Adrenal gland (tissue), 19 donors: ENCODE measurements at regions of chr5 and their contacts with region 1.

Region 1: GRCh38 chr5:91383027-91383955 is at the start of gene ARRDC3:
- DNase-seq: peak; percentile 96 to 98 (median 97)
- H3K4me3 ChIP-seq: peak within 1 kb of the TSS; percentile 18 to 95 (median 70)
- H3K27ac ChIP-seq: peak within 1 kb of the TSS; percentile 92 to 98 (median 97)
- H3K4me1 ChIP-seq: peaks cover 7 to 18% of the 10 kb centered on the region in 2 donors
- H3K27me3 ChIP-seq: no peaks in the 10 kb centered on the region
- CTCF ChIP-seq: peak in 1 of 6 experiments; percentile 7
- POLR2A ChIP-seq: peak; percentile 99
- total RNA-seq, gene ARRDC3: 64.4 to 410 (median 174) TPM

Region 2: GRCh38 chr5:91101600-91102379 is 281.5 kb before region 1 on chr5:
- intact Hi-C with region 1: loop called in 1 of 2 experiments (anchors 5 kb)
- DNase-seq: peak; percentile 73 to 86 (median 79)
- H3K4me3 ChIP-seq: no peak overlapping the region
- H3K27ac ChIP-seq: peak overlapping the region in 2 of 5 donors; percentile 24 to 26
- H3K4me1 ChIP-seq: peaks cover under 1 to 43% of the 10 kb centered on the region in 2 donors
- H3K27me3 ChIP-seq: no peaks in the 10 kb centered on the region
- CTCF ChIP-seq: peak; percentile 43 to 93 (median 87)
- POLR2A ChIP-seq: no peak

Region 3: GRCh38 chr5:91110686-91111085 is 272.6 kb before region 1 on chr5:
- intact Hi-C with region 1: loop called in 1 of 2 experiments (anchors 10 kb)
- DNase-seq: no peak
- H3K4me3 ChIP-seq: no peak overlapping the region
- H3K27ac ChIP-seq: no peak overlapping the region
- H3K4me1 ChIP-seq: peaks cover 15 to 29% of the 10 kb centered on the region in 2 donors
- H3K27me3 ChIP-seq: no peaks in the 10 kb centered on the region
- CTCF ChIP-seq: no peak
- POLR2A ChIP-seq: no peak

Region 4: GRCh38 chr5:91280362-91281269 is 102.7 kb before region 1 on chr5:
- intact Hi-C with region 1: loop called (anchors 5 kb)
- DNase-seq: peak; percentile 95 to 97 (median 97)
- H3K4me3 ChIP-seq: peak overlapping the region; percentile 21 to 67 (median 22)
- H3K27ac ChIP-seq: peak overlapping the region; percentile 92 to 99 (median 98)
- H3K4me1 ChIP-seq: peaks cover 6 to 20% of the 10 kb centered on the region in 2 donors
- H3K27me3 ChIP-seq: no peaks in the 10 kb centered on the region
- CTCF ChIP-seq: peak in 1 of 6 experiments; percentile 13
- POLR2A ChIP-seq: peak; percentile 89 to 98

Region 5: DNA sequence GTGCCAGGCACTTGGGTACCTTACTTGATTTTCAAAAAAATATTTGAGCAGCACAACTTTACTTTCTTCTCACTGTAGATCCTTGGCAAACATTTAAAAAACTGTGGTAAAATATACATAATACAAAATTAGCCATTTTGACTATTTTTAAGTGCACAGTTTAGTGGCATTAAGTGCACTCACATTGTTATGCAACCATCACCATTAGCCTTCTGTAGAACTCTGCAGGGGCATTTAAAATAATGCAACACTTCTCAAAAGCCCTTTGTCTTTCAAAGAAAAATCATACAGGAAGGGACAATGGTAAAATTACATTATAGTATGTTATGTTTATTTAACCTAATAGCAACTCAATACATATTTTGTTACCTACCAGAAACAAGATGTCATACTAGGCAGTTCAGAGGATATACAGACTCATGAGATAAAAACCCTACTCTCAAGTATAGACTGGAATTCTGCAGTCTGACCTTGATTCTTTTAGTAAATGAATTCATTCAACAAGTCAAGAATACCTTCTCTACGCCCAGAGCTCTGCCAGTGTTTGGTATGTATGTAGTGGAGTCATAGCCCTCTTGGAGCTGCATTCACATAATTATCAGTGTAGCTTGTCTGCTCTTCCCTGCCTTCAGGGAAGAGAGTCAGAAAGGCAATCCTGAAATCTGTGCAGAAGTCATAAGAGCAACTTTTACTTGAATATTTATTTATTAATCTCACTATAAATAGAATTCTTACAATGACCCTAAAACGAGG is 73.8 kb after region 1 on chr5:
- intact Hi-C with region 1: no loop called
- DNase-seq: no peak
- H3K4me3 ChIP-seq: no peak overlapping the region
- H3K27ac ChIP-seq: no peak overlapping the region
- H3K4me1 ChIP-seq: no peaks in the 10 kb centered on the region
- H3K27me3 ChIP-seq: no peaks in the 10 kb centered on the region
- CTCF ChIP-seq: no peak
- POLR2A ChIP-seq: no peak